ENCODE measurements at regions of chr1 and their contacts with region 1.

Region 1: GRCh38 chr1:227572752-227573151 is 9.4 kb downstream of the ZNF678 start:
- DNase-seq: no peak

Region 2: GRCh38 chr1:227542143-227543120 is 30.3 kb before region 1 on chr1:
- intact Hi-C with region 1: loop called in 1 of 2 experiments (anchors 1 kb)
- DNase-seq: peak; percentile 95

Measured in posterior vena cava (tissue), 2 donors.